ENCODE measurements at regions of chr1 and their contacts with region 1.

Region 1: GRCh38 chr1:153990468-153991150 is at the start of gene RPS27:
- DNase-seq: peak; percentile 59 to 95 (median 90)
- H3K4me3 ChIP-seq: peak within 1 kb of the TSS; percentile 59 to 100 (median 91)
- H3K27ac ChIP-seq: peak within 1 kb of the TSS; percentile 45 to 99 (median 92)
- H3K27me3 ChIP-seq: no peaks in the 10 kb centered on the region
- CTCF ChIP-seq: peak in 35 of 56 donors; percentile 10 to 59 (median 32)
- total RNA-seq, gene RPS27: 250 to 825 (median 494) TPM

Region 2: GRCh38 chr1:153352523-153352922 is 638.1 kb before region 1 on chr1:
- intact Hi-C with region 1: loop called in 1 of 2 experiments (anchors 10 kb)
- DNase-seq: peak in 9 of 10 donors; percentile 56 to 82 (median 70)
- H3K4me3 ChIP-seq: no peak overlapping the region
- H3K27ac ChIP-seq: no peak overlapping the region
- H3K27me3 ChIP-seq: peaks cover 0 to 34% (median 14%) of the 10 kb centered on the region in 45 donors
- CTCF ChIP-seq: peak; percentile 84 to 99 (median 95)

Region 3: GRCh38 chr1:153510984-153511410 is 479.6 kb before region 1 on chr1:
- intact Hi-C with region 1: loop called in 1 of 2 experiments (anchors 2 kb)
- DNase-seq: peak; percentile 41 to 83 (median 74)
- H3K4me3 ChIP-seq: no peak overlapping the region
- H3K27ac ChIP-seq: no peak overlapping the region
- H3K27me3 ChIP-seq: no peaks in the 10 kb centered on the region
- CTCF ChIP-seq: peak; percentile 34 to 96 (median 86)

Region 4: GRCh38 chr1:153677718-153678505 is 312.7 kb before region 1 on chr1:
- intact Hi-C with region 1: loop called (anchors 2 kb)
- DNase-seq: peak in 7 of 10 donors; percentile 41 to 61 (median 53)
- H3K4me3 ChIP-seq: peak overlapping the region; percentile 28 to 70 (median 52)
- H3K27ac ChIP-seq: no peak overlapping the region
- H3K27me3 ChIP-seq: peaks cover 0 to 31% (median 17%) of the 10 kb centered on the region in 45 donors
- CTCF ChIP-seq: peak; percentile 64 to 93 (median 85)

Region 5: DNA sequence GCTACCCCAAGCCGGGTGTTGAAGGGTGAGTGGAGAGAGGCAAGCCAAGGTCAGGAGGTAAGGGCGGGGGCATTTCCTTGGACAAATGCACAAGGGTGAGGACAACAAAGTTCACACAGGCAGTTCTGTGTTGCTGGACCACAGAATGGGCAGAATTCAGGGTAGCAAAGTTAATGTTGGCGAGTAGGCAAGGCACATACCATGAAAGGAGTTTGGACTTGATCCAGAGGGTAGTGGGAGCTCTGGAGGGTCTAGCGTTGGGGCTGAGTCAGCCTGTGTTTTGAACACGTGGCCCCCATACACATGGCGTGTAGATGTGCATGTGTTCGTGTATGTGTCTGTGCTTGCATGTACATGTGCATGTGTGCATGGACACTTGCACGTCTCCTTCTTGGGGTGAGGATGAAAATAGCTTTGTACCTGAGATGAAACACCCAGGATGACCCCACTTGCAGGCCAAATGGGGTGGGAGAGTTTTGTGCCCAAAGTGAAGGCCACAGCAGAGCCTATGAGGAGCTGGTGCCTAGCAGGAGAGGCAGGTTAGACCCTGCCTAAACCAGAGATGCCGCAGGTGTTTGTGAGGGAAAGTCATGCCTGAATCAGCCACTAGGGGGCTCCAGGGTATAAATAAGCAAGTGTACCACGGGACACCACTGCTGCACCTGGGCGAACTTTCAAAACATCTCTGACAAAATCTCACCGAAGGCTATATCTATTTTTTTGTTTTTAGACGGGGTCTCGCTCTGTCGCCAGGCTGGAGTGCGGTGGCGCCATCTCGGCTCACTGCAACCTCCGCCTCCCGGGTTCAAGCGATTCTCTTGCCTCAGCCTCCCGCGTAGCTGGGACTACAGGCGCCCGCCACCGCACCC is 193.6 kb before region 1 on chr1:
- intact Hi-C with region 1: loop called (anchors 5 kb)
- DNase-seq: peak in 8 of 10 donors; percentile 53 to 91 (median 72)
- H3K4me3 ChIP-seq: peak overlapping the region in 3 of 59 donors; percentile 7 to 22 (median 15)
- H3K27ac ChIP-seq: no peak overlapping the region
- H3K27me3 ChIP-seq: no peaks in the 10 kb centered on the region
- CTCF ChIP-seq: peak; percentile 68 to 94 (median 90)

Region 6: GRCh38 chr1:154183045-154183915 is 192.7 kb after region 1 on chr1:
- intact Hi-C with region 1: loop called in 1 of 2 experiments (anchors 10 kb)
- DNase-seq: peak; percentile 91 to 98 (median 96)
- H3K4me3 ChIP-seq: peak overlapping the region; percentile 66 to 99 (median 93)
- H3K27ac ChIP-seq: peak overlapping the region in 58 of 59 donors; percentile 46 to 96 (median 86)
- H3K27me3 ChIP-seq: no peaks in the 10 kb centered on the region
- CTCF ChIP-seq: peak in 46 of 56 donors; percentile 3 to 54 (median 32)

Region 7: DNA sequence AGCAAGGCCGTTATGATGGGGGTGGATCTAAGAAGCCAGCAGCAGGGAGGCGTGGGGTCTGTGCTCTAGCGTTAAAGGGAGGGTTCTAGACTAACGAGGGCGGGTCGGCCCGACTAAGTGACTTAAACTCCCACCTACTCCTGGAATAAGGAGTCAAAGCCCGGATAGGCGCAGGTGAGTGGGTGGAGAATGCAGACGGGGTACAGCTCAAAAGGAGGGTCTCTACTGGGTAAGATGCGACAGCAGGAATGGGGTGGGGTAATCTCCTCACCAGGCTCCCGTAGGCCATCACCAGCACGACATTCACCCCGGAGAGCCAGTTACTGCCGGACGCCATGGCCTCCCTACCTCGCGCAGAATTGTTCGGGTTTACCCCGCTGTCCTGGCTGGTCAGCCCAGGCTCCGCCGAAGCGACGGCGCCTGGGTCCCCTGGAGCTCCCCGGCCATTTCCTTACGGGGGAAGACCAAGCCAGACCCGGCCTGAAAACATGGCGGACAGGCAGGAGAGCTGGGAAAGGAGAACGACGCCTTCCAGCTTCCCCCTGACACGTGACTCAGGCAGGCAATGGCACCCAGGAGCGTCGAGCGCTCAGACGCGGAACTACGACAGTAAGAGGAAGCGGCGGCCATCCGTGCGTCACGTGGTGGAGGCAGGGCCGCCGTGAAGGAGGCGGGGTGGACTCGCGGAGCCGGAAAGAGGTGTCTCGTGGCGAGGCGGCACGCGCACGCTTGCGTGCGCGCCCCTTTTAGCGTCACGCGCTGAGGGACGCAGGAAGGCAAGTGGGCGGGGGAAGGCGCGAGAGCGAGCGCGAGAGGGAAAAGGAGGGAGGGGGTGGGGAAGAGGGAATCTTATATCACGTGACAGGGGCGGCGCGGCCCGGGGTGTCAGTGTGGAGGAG is 229.7 kb after region 1 on chr1 and contains the start of gene UBAP2L:
- intact Hi-C with region 1: loop called in 1 of 2 experiments (anchors 5 kb)
- DNase-seq: peak; percentile 96 to 99 (median 98)
- H3K4me3 ChIP-seq: peak within 1 kb of the TSS; percentile 71 to 100 (median 93)
- H3K27ac ChIP-seq: peak within 1 kb of the TSS; percentile 91 to 100 (median 99)
- H3K27me3 ChIP-seq: no peaks in the 10 kb centered on the region
- CTCF ChIP-seq: peak in 15 of 56 donors; percentile 6 to 52 (median 16)
- total RNA-seq, gene UBAP2L: 100 to 166 (median 130) TPM